Caco-2 (cell line): ENCODE measurements at regions of chr6 and their contacts with region 1.

Region 1: DNA sequence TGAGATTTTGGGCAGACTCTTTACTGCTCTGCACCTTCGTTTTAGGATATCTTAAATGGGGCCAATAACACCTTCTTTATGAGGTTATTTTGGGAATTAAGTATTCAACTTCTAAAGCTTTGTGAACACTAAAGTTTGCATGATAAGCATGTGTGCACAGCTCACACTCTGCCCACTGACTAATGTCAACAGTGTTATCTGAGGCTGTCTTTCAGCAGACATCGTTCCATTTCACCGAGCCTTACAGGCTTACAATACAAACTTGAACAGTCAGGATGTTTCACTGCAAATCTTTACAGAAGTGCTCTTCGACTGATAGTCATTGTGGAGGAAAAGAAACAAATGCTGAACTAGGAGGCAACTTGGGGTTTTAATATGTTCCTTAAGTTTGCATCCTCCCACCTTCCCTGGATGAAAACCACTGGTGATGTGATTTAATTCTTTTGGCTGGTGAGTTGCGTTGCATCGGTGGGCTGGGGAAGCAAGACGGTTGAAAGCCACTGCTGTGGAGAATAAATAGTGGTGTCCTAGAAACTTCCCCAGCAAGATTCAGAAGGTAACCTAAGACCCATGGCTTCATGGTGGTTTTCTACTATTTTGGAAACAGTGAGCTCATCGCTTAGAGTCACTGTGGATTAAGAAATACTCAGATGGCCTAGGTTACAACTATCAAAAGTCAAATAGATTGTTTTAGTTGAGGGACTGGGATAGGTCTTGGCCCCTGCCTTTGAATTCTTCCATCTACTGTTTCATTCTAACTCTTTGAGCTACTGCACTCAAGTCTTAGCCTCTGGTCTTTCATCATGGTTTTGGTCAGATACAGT is 167.2 kb upstream of the MAP3K7 start:
- DNase-seq: peak in 1 of 2 experiments; percentile 21
- H3K4me3 ChIP-seq: no peak overlapping the region
- H3K4me3 Mint-ChIP-seq: peak overlapping the region; percentile 58
- H3K27ac Mint-ChIP-seq: no peak overlapping the region
- H3K4me1 ChIP-seq: peaks cover 6% of the 10 kb centered on the region; the same call in 1 of the 2 replicates
- H3K4me1 Mint-ChIP-seq: peaks cover 14% of the 10 kb centered on the region
- H3K27me3 ChIP-seq: no peaks in the 10 kb centered on the region
- H3K27me3 Mint-ChIP-seq: no peaks in the 10 kb centered on the region
- CTCF ChIP-seq: no peak

Region 2: GRCh38 chr6:90765895-90766294 is 11.9 kb after region 1 on chr6:
- CTCF ChIA-PET with region 1: no interaction called
- POLR2A ChIA-PET with region 1: no interaction called
- intact Hi-C with region 1: no loop called
- DNase-seq: no peak
- H3K4me3 ChIP-seq: no peak overlapping the region
- H3K4me3 Mint-ChIP-seq: no peak overlapping the region
- H3K27ac Mint-ChIP-seq: no peak overlapping the region
- H3K4me1 ChIP-seq: no peaks in the 10 kb centered on the region
- H3K4me1 Mint-ChIP-seq: no peaks in the 10 kb centered on the region
- H3K27me3 ChIP-seq: no peaks in the 10 kb centered on the region
- H3K27me3 Mint-ChIP-seq: no peaks in the 10 kb centered on the region
- CTCF ChIP-seq: no peak

Region 3: GRCh38 chr6:90835596-90836212 is 81.7 kb after region 1 on chr6:
- CTCF ChIA-PET with region 1: no interaction called
- POLR2A ChIA-PET with region 1: no interaction called
- intact Hi-C with region 1: loop called (anchors 5 kb)
- DNase-seq: peak in 1 of 2 experiments; percentile 34
- H3K4me3 ChIP-seq: no peak overlapping the region
- H3K4me3 Mint-ChIP-seq: no peak overlapping the region
- H3K27ac Mint-ChIP-seq: no peak overlapping the region
- H3K4me1 ChIP-seq: peaks cover 8% of the 10 kb centered on the region; the same call in 1 of the 2 replicates
- H3K4me1 Mint-ChIP-seq: peaks cover 6% of the 10 kb centered on the region
- H3K27me3 ChIP-seq: no peaks in the 10 kb centered on the region
- H3K27me3 Mint-ChIP-seq: peaks cover 11% of the 10 kb centered on the region
- CTCF ChIP-seq: no peak